Colonic mucosa (tissue), 4 donors: ENCODE measurements at regions of chr22 and their contacts with region 1.

Region 1: GRCh38 chr22:41022470-41023298 is 69.7 kb upstream of the EP300 start:
- DNase-seq: peak; percentile 94
- H3K4me3 ChIP-seq: peak overlapping the region; percentile 65
- H3K27ac ChIP-seq: peak overlapping the region; percentile 99
- H3K4me1 ChIP-seq: peaks cover 4% of the 10 kb centered on the region
- H3K27me3 ChIP-seq: no peaks in the 10 kb centered on the region
- CTCF ChIP-seq: no peak

Region 2: DNA sequence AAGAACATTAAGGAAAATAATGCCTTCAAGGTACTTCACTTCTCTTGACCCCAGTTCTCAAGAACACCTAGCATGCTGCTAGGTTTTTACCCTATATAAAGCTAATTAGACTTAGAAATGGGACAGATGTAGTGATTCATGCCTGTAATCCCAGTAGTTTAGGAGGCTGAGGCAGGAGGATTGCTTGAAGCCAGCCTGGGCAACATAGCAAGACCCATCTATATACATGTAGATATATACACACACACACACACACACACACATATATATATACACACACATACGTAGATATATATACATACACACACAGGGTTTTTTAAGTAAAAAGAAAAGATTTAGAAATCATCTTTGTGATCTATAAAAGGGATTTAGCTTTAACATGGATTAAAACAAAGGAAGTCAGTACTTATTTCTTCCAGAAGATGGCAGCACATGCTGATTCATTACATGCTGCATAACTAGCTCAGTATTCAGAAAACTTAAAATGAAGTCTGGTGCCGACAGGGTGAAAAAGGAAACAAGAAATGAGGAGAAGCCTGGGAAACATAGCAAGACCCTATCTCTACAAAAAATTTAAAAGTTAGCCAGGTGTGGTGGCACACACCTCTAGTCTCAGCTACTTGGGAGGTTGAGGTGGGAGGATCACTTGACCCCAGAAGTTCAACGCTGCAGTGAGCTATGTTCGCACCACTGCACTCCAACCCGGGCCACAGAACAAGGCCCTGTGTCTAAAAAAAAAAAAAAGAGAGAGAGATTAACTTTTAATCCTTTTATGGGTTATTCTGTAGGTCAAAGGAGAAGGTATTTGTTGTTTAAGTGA is 100.0 kb before region 1 on chr22:
- intact Hi-C with region 1: no loop called
- DNase-seq: no peak
- H3K4me3 ChIP-seq: no peak overlapping the region
- H3K27ac ChIP-seq: no peak overlapping the region
- H3K4me1 ChIP-seq: no peaks in the 10 kb centered on the region
- H3K27me3 ChIP-seq: no peaks in the 10 kb centered on the region
- CTCF ChIP-seq: peak; percentile 72

Region 3: GRCh38 chr22:41091132-41092022 is 68.7 kb after region 1 on chr22:
- intact Hi-C with region 1: loop called (anchors 5 kb)
- DNase-seq: peak; percentile 99
- H3K4me3 ChIP-seq: peak overlapping the region; percentile 96
- H3K27ac ChIP-seq: peak overlapping the region; percentile 97
- H3K4me1 ChIP-seq: no peaks in the 10 kb centered on the region
- H3K27me3 ChIP-seq: no peaks in the 10 kb centered on the region
- CTCF ChIP-seq: no peak

Region 4: DNA sequence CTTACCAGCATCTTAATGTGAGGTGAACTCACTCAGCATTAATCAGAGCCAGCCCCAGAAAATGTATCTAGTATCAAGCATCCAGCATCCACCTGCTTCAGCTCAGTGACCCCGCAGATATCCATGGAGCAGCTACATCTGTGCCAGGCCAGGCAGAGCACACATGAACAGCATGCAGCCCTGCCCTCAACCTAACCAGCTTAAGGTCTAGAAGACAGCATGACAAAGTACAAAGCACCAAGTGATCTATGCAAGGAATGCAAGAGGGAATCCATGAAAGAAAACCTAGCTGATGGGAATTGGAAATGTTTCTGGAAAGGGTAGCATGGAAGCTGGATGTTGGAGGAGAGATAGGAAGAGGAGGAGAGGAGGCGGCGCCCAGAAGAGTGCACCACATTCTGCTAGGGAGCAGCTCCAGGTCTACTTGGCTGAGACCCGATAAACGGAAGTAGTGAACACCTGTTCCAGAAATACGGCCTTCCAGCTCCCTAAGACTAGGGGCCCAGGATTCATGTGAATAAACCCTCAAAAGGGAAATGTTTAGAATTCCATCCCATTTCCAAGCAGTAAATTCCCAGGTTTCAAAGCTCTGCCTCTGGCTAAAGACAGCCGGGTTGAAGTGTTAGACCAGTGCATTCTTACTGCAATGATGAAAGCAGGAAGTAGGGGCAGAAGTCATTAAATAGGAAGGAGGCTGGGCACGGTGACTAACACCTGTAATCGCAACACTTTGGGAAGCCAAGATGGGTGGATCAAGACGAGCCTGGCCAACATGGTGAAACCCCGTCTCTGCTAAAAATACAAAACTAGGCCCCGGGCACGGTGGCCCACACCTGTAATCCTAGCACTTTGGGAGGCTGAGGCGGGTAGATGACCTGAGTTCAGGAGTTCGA is 158.9 kb after region 1 on chr22:
- intact Hi-C with region 1: no loop called
- DNase-seq: no peak
- H3K4me3 ChIP-seq: no peak overlapping the region
- H3K27ac ChIP-seq: peak overlapping the region; percentile 43
- H3K4me1 ChIP-seq: no peaks in the 10 kb centered on the region
- H3K27me3 ChIP-seq: no peaks in the 10 kb centered on the region
- CTCF ChIP-seq: no peak

Region 5: DNA sequence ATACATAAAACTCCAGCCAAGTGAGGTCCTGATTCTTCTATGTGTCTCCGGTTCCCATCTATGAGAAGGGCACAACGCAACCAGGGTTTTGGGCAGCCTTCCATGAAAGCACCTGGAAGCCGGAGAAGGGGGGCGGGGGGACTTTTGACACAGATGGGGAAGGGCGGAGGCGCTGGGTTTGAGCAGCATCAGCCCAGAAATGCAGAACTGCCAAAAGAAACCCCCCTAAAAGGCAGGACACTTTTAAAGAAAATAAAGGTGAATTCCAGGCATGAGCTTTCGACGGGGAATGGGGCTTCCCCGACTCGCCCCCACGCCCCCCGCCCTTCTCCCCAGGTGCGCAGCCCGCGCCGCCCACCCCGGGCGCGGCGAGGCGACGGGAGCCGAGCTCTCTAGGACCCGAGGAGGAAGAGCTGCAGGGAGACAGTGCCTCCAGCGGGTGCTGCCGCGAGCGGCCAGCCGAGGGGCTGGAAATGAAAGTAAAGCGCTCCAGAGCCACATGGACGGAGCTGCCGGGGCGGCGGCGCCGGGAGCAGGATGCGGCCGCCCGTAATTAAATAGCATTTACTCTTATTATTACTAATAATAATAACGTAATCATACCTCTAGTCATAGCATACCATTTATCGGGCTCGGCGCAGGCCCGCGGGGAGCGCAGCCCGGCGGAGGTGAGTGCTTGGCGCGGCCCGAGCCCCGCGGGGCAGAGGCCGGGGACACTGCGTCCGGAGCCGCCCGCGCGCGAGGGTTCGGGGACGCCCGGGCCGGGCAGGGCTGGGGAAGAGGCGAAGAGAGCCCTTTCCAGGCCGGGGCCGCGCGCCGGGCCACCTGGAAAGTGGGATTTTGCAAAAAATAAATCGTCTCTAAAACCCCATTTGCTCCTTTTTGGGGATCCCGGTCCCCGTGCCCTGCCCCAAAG is 278.7 kb after region 1 on chr22 and contains the start of gene ZC3H7B:
- intact Hi-C with region 1: no loop called
- DNase-seq: peak; percentile 85
- H3K4me3 ChIP-seq: peak within 1 kb of the TSS; percentile 98
- H3K27ac ChIP-seq: peak within 1 kb of the TSS; percentile 77
- H3K4me1 ChIP-seq: peaks cover 3% of the 10 kb centered on the region
- H3K27me3 ChIP-seq: no peaks in the 10 kb centered on the region
- CTCF ChIP-seq: peak; percentile 39
- total RNA-seq, gene ZC3H7B: 35.2 to 51.7 TPM